ENCODE measurements at regions of chr1 and their contacts with region 1.

Region 1: GRCh38 chr1:223748773-223749733 is 36.7 kb downstream of the CAPN2 start:
- DNase-seq: peak; percentile 47 to 95 (median 66)

Region 2: DNA sequence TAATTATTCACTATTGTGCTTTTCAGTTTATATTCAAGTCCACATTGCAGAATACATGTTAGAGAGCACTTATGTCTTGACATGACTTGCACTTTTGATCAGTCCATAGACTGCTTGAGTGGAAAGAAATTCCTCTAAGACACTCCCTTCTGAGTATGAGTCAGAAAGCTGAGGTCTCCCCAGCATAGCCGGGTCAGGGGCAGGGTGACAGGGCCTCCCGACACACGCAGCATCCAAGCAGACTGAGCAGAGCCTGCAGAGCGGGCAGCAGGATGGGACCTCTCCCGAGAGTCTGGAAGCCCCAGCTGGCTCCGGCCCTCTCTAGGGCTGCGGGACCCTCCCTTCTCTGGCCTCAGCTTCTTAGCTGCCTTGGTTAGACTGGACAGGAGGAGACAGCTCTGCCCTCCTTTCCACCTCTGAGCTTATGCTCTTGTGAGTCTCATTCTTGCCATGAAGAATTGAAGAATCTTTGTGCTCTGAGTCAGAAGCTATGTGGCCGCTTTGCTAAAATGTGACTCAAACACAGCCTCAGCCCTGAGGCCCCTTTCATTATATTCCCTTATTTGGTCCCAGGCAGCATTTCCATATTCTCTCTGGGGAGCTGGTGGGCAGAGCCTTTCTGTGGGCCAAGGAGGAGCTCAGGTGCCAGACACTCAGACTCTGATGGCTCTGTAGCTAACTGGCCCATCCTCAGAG is 48.0 kb before region 1 on chr1:
- intact Hi-C with region 1: loop called (anchors 1 kb)
- DNase-seq: no peak

Region 3: DNA sequence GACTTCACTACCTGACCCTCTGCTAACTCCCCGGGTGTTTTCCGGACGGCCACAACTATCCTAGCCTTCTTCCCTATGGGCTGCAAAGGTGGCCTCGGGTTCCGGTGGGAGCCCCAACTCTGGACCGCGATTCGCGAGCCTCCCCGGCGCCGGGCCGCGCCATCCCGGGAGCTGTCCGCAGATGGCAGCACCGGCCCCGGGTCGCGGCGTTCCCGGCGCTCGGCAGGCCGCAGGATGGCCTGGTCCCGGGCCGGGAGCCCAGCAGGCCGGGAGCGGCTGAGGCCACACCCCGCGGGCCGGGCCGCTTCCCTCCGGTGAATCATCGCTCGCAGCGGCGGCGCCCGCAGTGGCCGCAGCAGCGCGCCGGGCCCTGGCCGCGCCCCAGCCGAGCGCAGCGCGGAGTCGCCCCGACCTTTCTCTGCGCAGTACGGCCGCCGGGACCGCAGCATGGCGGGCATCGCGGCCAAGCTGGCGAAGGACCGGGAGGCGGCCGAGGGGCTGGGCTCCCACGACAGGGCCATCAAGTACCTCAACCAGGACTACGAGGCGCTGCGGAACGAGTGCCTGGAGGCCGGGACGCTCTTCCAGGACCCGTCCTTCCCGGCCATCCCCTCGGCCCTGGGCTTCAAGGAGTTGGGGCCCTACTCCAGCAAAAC is 36.7 kb before region 1 on chr1 and contains the start of gene CAPN2:
- intact Hi-C with region 1: loop called (anchors 1 kb)
- DNase-seq: peak; percentile 53 to 96 (median 70)

Measured in posterior cingulate gyrus (tissue), 11 donors.